ENCODE measurements at regions of chr9 and their contacts with region 1.

Region 1: DNA sequence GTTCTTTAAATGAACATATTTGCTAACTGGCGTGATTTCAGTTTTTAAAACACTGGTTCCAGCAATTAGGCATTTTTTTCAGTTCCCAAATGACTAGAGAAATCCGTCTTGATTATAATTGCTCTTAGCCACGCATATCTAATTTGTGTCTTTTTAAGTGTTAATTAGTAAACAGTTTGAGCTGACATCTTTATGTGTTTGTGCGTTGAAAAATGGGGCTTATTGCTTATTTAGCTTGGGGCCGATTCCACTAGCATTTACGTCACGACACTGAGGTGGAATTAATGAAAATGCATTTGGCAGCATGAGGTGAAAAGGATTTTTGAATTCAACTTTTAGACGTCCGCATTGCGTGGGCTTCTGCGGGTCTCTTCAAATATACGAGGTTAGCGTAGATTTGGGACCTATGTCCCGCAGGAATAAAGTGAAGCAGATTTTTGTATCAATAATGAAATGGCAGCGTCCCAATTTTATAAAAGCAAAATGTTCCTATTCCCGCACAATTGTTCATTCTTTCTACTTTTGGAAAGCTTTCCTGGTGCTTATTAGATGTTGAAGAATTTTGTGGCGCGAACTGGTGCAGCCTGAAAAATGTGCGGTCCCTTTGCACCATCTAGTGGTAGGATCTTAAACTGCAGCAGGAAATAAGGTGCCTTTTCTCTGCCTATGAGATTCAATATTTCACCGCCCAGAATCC is 122.7 kb upstream of the LMX1B start:
- DNase-seq: no peak
- ATAC-seq: peak in 3 of 4 donors; percentile 47 to 55 (median 53)
- H3K4me3 ChIP-seq: no peak overlapping the region
- H3K27ac ChIP-seq: no peak overlapping the region
- H3K4me1 ChIP-seq: peaks cover 0 to 6% (median 1%) of the 10 kb centered on the region in 12 donors
- H3K27me3 ChIP-seq: no peaks in the 10 kb centered on the region
- CTCF ChIP-seq: peak; percentile 82 to 98 (median 91)
- POLR2A ChIP-seq: no peak

Region 2: GRCh38 chr9:126301985-126302603 is 188.9 kb before region 1 on chr9:
- intact Hi-C with region 1: loop called (anchors 2 to 5 kb)
- DNase-seq: peak in 4 of 5 donors; percentile 49 to 60 (median 57)
- ATAC-seq: peak in 3 of 4 donors; percentile 86
- H3K4me3 ChIP-seq: no peak overlapping the region
- H3K27ac ChIP-seq: no peak overlapping the region
- H3K4me1 ChIP-seq: no peaks in the 10 kb centered on the region
- H3K27me3 ChIP-seq: no peaks in the 10 kb centered on the region
- CTCF ChIP-seq: peak; percentile 64 to 84 (median 74)
- POLR2A ChIP-seq: no peak

Region 3: DNA sequence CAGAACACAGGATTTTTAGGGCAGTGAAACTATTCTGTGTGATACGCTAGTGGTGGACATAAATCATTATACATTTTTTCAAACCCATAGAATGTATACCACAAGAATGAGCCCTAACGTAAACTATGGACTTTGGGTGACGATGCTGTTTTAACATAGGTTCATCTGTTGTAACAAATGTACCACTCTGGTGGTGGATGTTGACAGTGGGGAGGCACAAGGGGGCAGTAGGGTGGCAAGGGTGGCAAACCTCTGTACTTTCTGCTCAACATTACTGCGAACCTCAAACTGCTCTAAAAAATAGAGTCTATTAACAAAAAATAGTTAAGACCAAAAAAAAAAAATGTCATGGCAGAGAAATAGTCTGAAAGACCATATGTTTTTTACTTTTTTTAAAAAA is 173.5 kb before region 1 on chr9:
- intact Hi-C with region 1: loop called in 2 of 10 experiments (anchors 5 kb)
- DNase-seq: no peak
- ATAC-seq: peak in 1 of 4 donors; percentile 72
- H3K4me3 ChIP-seq: no peak overlapping the region
- H3K27ac ChIP-seq: no peak overlapping the region
- H3K4me1 ChIP-seq: peaks cover 0 to 4% (median 0%) of the 10 kb centered on the region in 12 donors
- H3K27me3 ChIP-seq: no peaks in the 10 kb centered on the region
- CTCF ChIP-seq: peak in 10 of 12 donors; percentile 17 to 49 (median 39)
- POLR2A ChIP-seq: no peak

Region 4: DNA sequence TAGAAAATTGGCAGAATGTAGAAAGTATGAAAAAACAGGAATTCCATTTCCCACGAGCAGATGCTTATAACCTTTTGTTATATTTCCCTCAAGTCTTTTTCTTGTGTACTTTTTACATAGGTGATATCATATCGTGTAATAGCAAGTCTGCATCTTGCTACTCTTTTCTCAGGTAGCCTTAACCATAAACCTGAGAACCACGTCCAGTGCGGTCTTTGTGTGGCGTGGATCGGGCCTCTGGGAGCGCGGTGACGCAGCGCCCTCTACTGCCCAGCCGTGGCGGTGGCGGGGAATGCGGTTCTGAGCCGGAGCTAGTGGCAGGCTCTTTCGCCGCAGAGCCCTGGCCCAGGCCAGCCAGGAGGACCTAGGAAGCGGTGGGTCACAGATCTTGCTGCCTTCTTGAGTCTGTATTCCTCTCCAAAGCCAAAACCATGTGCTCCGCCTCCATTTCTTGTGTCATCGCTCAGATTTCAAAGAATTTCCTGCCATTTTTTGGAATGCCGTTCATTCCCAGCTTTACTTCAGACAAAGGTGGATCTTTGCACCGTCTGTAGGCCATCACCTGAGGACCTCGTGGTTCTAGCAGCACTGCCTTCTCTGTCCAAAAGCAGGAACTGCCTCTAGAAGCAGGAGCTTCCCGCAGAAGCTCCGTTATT is 92.5 kb before region 1 on chr9:
- intact Hi-C with region 1: loop called in 6 of 10 experiments (anchors 1 to 10 kb)
- DNase-seq: peak; percentile 70 to 91 (median 83)
- ATAC-seq: peak; percentile 79 to 92 (median 88)
- H3K4me3 ChIP-seq: no peak overlapping the region
- H3K27ac ChIP-seq: no peak overlapping the region
- H3K4me1 ChIP-seq: peaks cover 0 to 24% (median 4%) of the 10 kb centered on the region in 12 donors
- H3K27me3 ChIP-seq: no peaks in the 10 kb centered on the region
- CTCF ChIP-seq: peak in 11 of 12 donors; percentile 95 to 99 (median 97)
- POLR2A ChIP-seq: no peak

Region 5: DNA sequence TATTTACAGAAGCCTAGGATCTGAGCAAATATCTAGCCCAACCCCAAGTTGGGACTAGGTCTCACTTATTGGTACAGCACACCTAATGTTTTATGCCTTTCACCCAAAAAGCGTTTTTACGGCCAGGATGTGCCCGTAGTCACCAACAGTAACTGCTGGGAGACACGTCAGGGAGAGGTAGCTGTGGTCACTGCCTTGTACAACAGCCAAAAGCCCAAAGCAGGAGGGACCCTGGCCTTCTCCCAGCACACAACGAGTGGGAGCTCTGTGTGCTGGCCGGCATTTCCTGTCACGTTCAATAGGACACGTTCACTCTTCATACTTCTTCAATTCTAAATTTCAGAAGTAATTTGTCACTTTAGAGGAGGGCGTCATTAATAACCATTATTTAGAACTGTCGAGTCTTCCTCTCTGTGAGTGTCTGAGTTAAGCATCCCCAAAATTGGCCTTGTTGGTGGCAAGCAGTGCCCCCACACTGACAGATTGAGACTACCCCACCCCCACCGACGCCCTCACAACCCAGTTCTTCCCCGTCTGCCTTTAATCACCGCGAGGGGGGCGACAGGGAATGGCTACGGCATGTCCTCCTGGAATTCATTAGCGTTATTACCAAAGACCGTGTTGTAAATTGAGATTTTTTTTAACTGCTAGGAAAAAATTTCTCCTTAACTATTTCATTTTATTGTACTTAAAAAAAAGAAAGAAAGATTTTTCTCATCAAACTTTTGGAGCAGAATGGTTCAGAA is 83.7 kb before region 1 on chr9:
- intact Hi-C with region 1: loop called in 2 of 10 experiments (anchors 10 kb)
- DNase-seq: no peak
- ATAC-seq: peak in 2 of 4 donors; percentile 52 to 54
- H3K4me3 ChIP-seq: no peak overlapping the region
- H3K27ac ChIP-seq: no peak overlapping the region
- H3K4me1 ChIP-seq: peaks cover 0 to 18% (median 9%) of the 10 kb centered on the region in 12 donors
- H3K27me3 ChIP-seq: no peaks in the 10 kb centered on the region
- CTCF ChIP-seq: no peak
- POLR2A ChIP-seq: no peak

Region 6: DNA sequence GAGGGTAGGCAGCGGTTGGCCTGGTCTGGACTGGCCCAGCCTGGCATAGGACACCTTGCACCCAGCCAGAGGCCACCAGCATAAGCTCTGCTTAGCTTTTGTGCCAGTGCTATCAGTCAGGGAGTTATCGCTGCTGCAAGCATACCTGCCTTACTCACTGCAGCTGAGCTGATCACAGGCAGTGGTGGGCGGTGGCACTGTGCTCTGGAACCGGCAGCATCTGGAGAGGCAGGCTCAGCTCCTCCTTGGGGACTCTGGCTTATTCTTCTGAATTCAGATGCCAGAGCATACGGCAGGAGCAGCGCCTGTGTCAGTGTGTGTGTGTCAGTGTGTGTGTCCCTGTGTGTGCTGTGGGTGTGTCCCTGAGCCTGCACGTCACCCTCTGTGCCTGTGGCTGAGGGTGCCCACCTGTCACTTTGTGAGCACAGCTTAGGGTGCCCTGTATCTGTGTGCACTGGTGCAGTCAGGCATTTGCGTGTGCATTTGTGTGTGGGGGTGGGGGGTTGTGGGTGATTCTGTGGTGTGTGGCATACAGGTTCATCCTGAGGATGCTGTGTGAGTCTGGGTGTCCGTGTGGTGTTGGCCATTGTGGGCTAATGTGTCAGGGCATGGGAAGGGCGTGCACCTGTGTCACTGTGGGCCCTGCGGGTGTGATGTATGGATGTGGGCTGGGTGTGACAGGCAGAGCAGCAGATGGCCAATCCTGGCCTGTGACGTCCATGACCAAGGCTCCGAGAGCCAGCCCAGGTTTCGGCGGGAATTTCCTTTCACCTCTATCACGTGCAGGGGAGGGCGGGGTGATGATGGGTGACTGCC is 146.2 kb after region 1 on chr9:
- intact Hi-C with region 1: no loop called
- DNase-seq: no peak
- ATAC-seq: no peak
- H3K4me3 ChIP-seq: no peak overlapping the region
- H3K27ac ChIP-seq: no peak overlapping the region
- H3K4me1 ChIP-seq: peaks cover 0 to 11% (median 6%) of the 10 kb centered on the region in 12 donors
- H3K27me3 ChIP-seq: peaks cover 13 to 75% (median 34%) of the 10 kb centered on the region in 9 donors
- CTCF ChIP-seq: no peak
- POLR2A ChIP-seq: no peak

Measured in heart left ventricle (tissue), 16 donors.